Endothelial cell of umbilical vein (primary cell): ENCODE measurements at regions of chrX and their contacts with region 1.

Region 1: DNA sequence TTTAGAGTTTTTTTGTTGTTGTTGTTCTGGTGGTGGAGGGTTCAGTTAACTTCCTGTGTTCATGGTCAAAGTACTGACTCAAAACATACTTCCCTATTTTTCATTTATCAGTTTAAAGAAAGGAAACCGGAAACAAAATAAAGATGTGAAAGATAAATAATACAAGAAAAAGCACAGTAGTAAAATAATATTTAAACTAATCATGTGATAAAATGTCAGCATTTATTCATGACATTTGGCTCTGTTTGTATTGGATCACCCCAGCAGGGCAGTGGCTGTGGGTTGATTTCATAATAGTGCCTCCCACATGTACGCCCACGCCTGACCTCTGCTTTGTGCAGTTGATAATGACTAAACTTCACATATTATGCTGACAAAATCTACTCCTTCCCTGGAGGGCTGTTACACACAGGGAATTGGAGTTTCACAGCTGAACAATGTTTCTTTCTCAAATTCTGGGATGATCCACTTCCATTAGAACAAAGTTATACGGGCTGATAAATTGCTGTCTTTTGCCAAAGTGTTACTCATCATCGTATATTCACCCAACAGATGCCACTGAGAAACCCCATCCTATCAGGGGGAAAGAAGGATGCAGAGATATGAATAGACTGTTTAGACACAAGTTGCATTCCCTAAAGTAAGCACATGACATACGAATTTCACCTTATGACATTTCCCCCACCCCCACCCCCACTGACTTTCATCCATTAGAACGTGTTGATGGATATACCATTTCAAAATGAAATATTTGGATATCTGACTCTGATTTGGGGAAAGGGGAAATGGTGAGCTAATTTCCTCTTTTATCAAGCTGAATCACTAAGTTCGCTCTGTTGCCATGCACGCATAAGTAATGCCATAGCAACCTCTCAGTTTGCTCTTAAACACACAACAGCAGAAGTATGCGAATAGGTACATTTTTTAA is 48.3 kb downstream of the AMELX start:
- DNase-seq: peak; percentile 89
- H3K4me3 ChIP-seq: peak overlapping the region in 1 of 3 experiments; percentile 18
- H3K27ac ChIP-seq: peak overlapping the region; percentile 96
- H3K4me1 ChIP-seq: peaks cover 14% of the 10 kb centered on the region
- H3K27me3 ChIP-seq: no peaks in the 10 kb centered on the region
- CTCF ChIP-seq: no peak
- POLR2A ChIP-seq: no peak

Region 2: GRCh38 chrX:10755439-10756334 is 585.9 kb before region 1 on chrX:
- CTCF ChIA-PET with region 1: no interaction called
- POLR2A ChIA-PET with region 1: no interaction called
- dilution Hi-C with region 1: no loop called
- intact Hi-C with region 1: loop called (anchors 5 kb)
- DNase-seq: peak; percentile 58
- H3K4me3 ChIP-seq: no peak overlapping the region
- H3K27ac ChIP-seq: peak overlapping the region; percentile 44
- H3K4me1 ChIP-seq: peaks cover 9% of the 10 kb centered on the region
- H3K27me3 ChIP-seq: no peaks in the 10 kb centered on the region
- CTCF ChIP-seq: no peak
- POLR2A ChIP-seq: no peak

Region 3: GRCh38 chrX:10922158-10922557 is 419.4 kb before region 1 on chrX:
- CTCF ChIA-PET with region 1: no interaction called
- POLR2A ChIA-PET with region 1: no interaction called
- dilution Hi-C with region 1: no loop called
- intact Hi-C with region 1: loop called (anchors 2 kb)
- DNase-seq: peak; percentile 84
- H3K4me3 ChIP-seq: no peak overlapping the region
- H3K27ac ChIP-seq: peak overlapping the region; percentile 60
- H3K4me1 ChIP-seq: peaks cover 17% of the 10 kb centered on the region
- H3K27me3 ChIP-seq: no peaks in the 10 kb centered on the region
- CTCF ChIP-seq: no peak
- POLR2A ChIP-seq: no peak

Region 4: GRCh38 chrX:11267425-11267824 is 74.1 kb before region 1 on chrX:
- CTCF ChIA-PET with region 1: no interaction called
- POLR2A ChIA-PET with region 1: no interaction called
- dilution Hi-C with region 1: no loop called
- intact Hi-C with region 1: no loop called
- DNase-seq: no peak
- H3K4me3 ChIP-seq: no peak overlapping the region
- H3K27ac ChIP-seq: no peak overlapping the region
- H3K4me1 ChIP-seq: no peaks in the 10 kb centered on the region
- H3K27me3 ChIP-seq: no peaks in the 10 kb centered on the region
- CTCF ChIP-seq: no peak
- POLR2A ChIP-seq: no peak

Region 5: DNA sequence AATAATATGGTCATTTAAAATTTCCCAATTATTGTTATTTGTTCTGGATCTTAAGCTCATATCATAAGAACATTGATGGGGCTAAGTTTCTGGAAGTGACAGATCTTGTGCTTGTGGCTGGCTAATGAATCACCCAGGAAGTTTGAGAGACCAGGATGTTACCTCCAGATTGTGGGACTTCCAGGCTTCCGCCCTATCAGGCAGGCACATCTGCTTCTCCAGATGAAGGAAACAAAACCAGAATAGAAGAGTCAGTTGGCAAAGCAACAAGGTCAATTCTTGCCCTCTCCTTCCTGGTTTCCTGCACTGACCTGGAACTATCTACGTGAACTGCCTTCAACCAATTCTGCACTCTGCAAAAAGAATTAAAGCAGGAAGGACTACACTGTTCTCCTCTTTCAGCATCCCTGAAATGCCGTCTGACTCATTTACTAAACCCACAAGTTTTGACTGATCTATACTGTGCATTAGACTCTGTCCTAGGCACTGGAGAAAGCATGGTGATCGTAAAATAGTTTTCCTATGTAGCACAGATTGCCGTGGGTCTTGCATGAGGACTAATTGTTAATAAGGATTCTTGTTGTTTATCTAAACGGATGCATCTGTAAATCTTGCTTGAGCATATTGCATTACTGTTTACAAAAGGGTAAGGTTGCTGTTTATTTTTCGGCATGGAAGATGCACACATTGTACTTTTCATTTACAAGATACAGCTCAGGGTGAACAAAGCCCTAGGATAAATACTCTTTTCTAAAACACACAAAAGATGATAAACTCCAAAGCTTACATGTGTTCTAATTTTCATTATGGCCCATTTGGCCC is 26.3 kb after region 1 on chrX:
- CTCF ChIA-PET with region 1: interaction called, 3 read pairs
- POLR2A ChIA-PET with region 1: no interaction called
- dilution Hi-C with region 1: no loop called
- intact Hi-C with region 1: loop called (anchors 1 kb)
- DNase-seq: peak; percentile 55
- H3K4me3 ChIP-seq: no peak overlapping the region
- H3K27ac ChIP-seq: peak overlapping the region; percentile 47
- H3K4me1 ChIP-seq: peaks cover 14% of the 10 kb centered on the region
- H3K27me3 ChIP-seq: no peaks in the 10 kb centered on the region
- CTCF ChIP-seq: no peak
- POLR2A ChIP-seq: no peak

Region 6: GRCh38 chrX:11412715-11413623 is 71.4 kb after region 1 on chrX:
- CTCF ChIA-PET with region 1: no interaction called
- POLR2A ChIA-PET with region 1: no interaction called
- dilution Hi-C with region 1: no loop called
- intact Hi-C with region 1: loop called (anchors 2 kb)
- DNase-seq: peak; percentile 71
- H3K4me3 ChIP-seq: no peak overlapping the region
- H3K27ac ChIP-seq: peak overlapping the region; percentile 24
- H3K4me1 ChIP-seq: peaks cover 11% of the 10 kb centered on the region
- H3K27me3 ChIP-seq: no peaks in the 10 kb centered on the region
- CTCF ChIP-seq: no peak
- POLR2A ChIP-seq: no peak